OCI-LY7 (cell line): ENCODE measurements at regions of chr16 and their contacts with region 1.

Region 1: DNA sequence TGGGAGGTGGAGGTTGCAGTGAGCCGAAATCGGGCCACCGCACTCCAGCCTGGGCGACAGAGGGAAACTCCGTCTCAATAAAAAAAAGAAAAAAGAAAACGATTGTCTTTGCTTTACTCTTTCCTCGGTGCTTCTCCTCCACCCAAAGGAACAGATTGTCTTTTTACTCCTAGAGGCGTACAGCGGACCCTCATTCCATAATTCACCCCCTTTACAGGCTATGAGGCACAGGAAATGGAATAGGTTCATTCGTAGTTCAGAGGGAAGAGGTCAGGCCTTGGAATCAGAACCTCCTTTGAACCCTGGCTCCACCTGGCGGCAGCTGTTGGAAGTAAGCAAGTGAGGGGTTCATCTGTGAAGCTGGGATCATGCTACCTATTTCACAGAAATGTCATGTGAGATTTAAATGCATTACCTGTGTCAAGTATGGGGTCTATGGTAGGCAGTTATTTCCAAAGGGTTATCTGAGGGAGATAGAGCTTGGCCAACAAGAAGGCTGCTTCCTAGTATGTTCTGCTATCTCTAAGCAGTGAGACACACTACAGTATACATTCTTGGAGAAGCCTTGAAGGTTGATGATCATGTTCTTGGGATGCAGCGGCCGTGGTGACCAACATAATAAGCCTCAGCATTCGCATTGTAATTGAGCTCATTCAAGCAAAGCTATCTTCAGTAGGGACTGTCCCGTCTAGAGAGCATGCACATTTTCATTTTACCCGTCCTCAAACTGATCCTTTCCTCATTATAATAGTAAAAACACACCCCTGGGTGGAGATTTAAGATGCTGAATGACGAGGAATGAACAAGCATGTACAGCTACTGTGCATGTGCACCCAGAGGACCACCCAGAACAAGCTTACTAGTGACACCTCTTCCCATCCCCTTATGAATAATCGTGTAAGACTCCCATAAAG is 18.7 kb upstream of the ZNF689 start:
- DNase-seq: peak; percentile 84
- H3K4me3 ChIP-seq: no peak overlapping the region
- H3K27ac ChIP-seq: no peak overlapping the region
- H3K4me1 ChIP-seq: peaks cover 15% of the 10 kb centered on the region
- CTCF ChIP-seq: peak; percentile 97

Region 2: DNA sequence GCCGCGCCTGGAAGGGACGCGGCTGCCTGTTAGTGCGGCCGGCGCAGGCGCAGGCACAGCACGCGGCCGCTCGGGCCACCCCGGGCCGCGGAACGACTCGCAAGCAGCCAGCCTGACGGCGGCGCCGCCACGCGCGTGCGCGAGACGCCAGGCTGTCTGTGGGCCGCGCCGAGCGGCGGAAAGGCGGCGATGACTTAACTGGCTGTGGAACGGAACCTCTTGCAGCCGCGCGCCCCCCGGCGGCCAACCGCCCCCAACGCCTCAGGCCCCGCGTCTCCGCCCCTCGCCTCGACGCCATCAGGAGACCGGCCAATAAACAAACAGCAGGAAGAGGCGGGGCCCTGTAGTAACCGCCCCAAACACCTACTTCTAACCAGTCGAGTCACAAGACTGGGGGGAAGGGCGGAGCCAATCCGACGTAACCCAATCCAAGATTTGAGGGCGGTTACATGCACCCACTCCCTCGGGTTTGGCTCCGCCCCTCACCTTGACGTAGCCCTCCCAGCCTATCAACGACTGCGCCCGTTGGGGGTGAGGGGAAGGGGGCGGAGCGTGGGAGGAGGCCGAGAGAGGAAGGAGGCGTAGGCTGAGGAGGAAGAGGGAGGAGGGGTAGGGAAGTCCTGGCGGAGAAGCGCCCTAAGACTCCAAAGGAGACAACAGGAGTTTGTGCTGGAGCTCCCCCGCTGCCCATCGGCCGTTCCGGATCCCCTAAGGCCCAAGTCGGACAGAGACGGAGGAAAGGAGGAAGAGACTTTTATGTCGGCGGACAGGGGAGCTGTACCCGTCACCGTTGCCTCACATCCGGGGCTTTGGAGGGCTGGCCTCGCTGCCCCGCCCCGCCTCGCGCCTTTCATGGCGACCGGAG is 29.2 kb after region 1 on chr16 and contains the start of gene FBRS:
- CTCF ChIA-PET with region 1: no interaction called
- POLR2A ChIA-PET with region 1: interaction called, 3 read pairs
- intact Hi-C with region 1: loop called (anchors 2 kb)
- DNase-seq: peak; percentile 100
- H3K4me3 ChIP-seq: peak within 1 kb of the TSS; percentile 99
- H3K27ac ChIP-seq: peak within 1 kb of the TSS; percentile 87
- H3K4me1 ChIP-seq: peaks cover 22% of the 10 kb centered on the region
- CTCF ChIP-seq: peak; percentile 85
- total RNA-seq, gene FBRS: 31.8 and 36.8 TPM in 2 replicates